HEK293T (cell line): ENCODE measurements at regions of chr2 and their contacts with region 1.

Region 1: GRCh38 chr2:24123195-24123921 is at the starts of genes FAM228B and PFN4:
- DNase-seq: peak; percentile 81

Region 2: DNA sequence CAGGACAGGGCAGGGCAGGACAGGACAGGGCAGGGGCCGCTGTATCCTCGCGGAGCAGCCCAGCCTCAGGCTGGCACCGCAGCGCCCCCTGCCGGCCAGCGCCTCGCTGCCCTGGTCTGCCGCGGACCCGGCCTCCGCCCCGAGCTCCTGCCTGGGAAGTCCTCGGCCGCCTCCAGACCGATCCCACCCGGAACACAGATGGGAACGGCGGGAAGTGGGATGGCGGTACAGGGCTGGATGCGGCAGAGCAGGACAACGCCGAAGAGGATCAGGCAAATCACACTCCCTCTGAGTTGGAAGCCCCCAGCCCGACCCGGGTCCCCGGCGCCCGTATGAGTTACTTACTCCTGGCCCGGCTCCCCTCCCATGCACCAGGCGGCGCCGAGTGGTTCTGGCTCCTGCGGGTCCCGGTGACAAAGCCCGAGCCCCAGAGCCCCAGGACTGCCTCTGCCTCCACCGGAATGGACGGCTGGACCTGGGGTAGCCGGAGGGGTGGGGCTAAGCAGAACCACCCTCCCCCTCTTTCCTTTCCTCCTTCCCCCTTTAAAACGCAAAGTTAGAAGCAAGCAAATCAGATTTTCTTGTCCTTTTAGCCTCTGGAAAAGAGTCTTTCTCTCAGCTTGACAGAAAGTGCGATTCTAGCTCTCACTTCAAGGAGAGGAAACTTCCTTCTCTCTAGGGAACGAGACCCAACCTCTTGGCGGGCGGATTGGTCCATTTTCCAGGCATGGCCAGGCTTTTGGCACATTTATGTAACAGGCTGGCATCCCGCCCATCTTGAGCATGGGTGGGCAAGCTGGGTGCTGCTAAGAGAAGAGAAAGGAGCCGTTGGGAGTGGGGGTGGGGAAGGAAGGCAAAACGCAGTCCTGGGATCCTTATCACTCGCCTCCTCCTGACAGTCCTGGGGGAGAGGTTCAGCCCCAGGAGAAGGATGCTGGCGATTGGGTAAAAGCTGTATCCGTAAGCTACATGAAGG is 38.7 kb before region 1 on chr2 and contains the start of gene TP53I3:
- CTCF ChIA-PET with region 1: no interaction called
- POLR2A ChIA-PET with region 1: interaction called, 26 read pairs
- DNase-seq: peak; percentile 92